Activated naive CD4-positive, alpha-beta T cell treated with anti-CD3 and anti-CD28 coated beads for 36 hours (primary cell): ENCODE measurements at regions of chr1 and their contacts with region 1.

Region 1: DNA sequence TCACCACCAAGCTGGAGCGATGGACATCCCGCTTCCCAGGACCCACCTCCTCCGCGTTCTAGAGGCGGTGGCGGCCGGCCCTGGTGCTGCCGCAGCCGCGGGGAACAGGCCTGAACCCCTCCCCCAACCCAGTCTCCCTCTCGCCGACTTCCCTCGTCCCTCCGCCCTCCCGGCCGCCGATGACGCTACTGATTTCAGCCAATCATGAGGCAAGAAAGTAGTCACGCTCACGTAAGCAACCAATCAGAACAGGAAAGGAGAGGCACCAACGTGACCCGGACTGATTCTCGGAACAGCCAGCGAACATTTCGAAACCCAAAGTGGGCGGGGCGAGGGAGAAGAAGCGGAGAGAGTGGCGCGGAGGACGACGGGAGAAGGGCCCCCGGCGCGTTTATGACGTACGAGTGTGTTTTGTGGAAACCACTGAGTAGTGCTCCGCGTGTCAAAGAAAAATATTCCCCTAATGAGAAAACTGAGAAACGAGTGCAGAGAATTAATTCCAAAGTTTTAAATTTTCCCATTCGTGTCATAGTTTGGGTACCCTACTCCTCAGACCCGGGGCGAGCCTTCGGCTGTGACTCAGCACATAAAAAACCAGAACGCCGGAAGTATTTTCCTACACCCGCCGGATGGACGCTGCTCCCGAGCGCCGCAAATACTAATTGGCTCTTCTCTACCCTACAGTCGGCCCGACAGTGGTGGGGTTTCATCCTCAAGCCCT is at the start of gene NRDC:
- DNase-seq: peak; percentile 100
- H3K4me3 Mint-ChIP-seq: no peak within 1 kb of the TSS
- H3K27ac Mint-ChIP-seq: no peak within 1 kb of the TSS
- H3K4me1 Mint-ChIP-seq: peaks cover 26% of the 10 kb centered on the region
- H3K27me3 Mint-ChIP-seq: peaks cover 2% of the 10 kb centered on the region
- total RNA-seq, gene NRDC: 136 to 145 TPM

Region 2: GRCh38 chr1:50968158-50968820 is 910.5 kb before region 1 on chr1:
- CTCF ChIA-PET with region 1: no interaction called
- intact Hi-C with region 1: loop called (anchors 5 kb)
- DNase-seq: peak; percentile 87
- H3K4me3 Mint-ChIP-seq: peak overlapping the region; percentile 90
- H3K27ac Mint-ChIP-seq: peak overlapping the region; percentile 96
- H3K4me1 Mint-ChIP-seq: peaks cover 21% of the 10 kb centered on the region
- H3K27me3 Mint-ChIP-seq: peaks cover 11% of the 10 kb centered on the region

Region 3: GRCh38 chr1:51506537-51506936 is 372.2 kb before region 1 on chr1:
- CTCF ChIA-PET with region 1: no interaction called
- intact Hi-C with region 1: loop called (anchors 1 kb)
- DNase-seq: no peak
- H3K4me3 Mint-ChIP-seq: no peak overlapping the region
- H3K27ac Mint-ChIP-seq: no peak overlapping the region
- H3K4me1 Mint-ChIP-seq: peaks cover 52% of the 10 kb centered on the region
- H3K27me3 Mint-ChIP-seq: no peaks in the 10 kb centered on the region

Region 4: DNA sequence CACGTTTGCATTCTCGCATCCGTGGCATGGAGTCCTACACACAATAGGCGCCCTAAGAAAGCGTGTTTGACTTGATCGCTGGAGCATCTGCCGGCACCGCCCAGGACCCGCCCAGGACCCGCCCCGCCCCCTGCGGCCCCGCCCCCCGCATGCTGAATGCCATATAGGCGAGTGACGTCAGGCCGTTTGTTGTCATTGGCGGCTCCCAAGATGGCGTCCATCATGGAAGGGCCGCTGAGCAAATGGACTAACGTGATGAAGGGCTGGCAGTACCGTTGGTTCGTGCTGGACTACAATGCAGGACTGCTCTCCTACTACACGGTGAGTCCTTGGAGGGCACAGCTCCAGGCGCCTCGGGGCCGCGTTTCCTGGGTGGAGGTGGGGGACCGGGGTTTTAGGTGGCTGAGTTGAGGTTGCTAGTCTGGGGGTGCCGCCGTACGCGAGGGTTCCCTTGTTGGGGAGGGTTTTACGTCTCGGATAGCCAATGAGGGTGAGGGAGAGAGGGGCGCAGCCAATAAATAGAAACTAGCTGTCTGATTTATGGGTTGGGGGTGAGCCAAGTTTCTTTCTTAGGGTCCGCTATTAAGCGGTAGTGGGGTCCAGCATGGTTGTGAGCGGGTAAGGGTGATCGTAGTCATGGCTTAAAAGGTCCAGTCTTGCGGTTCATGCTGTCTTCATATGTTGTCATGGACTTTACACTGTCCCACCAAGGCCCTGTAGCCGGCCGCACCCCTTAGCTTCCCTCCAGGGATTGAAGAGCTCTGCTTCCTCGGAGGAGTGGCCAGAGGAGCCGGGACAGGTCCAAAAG is 261.7 kb before region 1 on chr1 and contains the start of gene OSBPL9:
- CTCF ChIA-PET with region 1: no interaction called
- intact Hi-C with region 1: loop called (anchors 2 kb)
- DNase-seq: peak; percentile 94
- H3K4me3 Mint-ChIP-seq: peak within 1 kb of the TSS; percentile 98
- H3K27ac Mint-ChIP-seq: peak within 1 kb of the TSS; percentile 89
- H3K4me1 Mint-ChIP-seq: peaks cover 25% of the 10 kb centered on the region
- H3K27me3 Mint-ChIP-seq: no peaks in the 10 kb centered on the region
- total RNA-seq, gene OSBPL9: 38.2 to 40.7 TPM

Region 5: GRCh38 chr1:51708911-51709760 is 169.6 kb before region 1 on chr1:
- CTCF ChIA-PET with region 1: no interaction called
- intact Hi-C with region 1: no loop called
- DNase-seq: no peak
- H3K4me3 Mint-ChIP-seq: no peak overlapping the region
- H3K27ac Mint-ChIP-seq: no peak overlapping the region
- H3K4me1 Mint-ChIP-seq: peaks cover 3% of the 10 kb centered on the region
- H3K27me3 Mint-ChIP-seq: no peaks in the 10 kb centered on the region

Region 6: DNA sequence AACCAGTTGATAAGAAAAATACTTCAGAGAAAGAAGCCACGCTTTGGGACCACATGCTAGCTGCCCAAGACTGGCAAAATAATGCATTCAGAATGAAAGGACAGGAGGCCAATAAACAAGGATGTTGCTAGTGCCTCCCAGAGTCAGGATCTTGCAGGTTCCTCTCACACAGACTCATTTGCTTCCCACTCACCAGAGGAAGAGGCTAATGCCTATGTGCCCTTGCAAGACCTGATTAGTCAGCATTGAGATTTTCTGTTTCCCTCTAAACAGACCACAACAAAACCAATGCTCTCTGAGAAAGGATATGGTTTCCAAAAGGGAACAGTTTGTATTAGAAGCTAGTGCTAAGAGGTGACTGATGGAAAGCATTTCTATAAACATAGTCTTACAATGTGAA is 85.9 kb before region 1 on chr1:
- CTCF ChIA-PET with region 1: no interaction called
- intact Hi-C with region 1: loop called (anchors 2 kb)
- DNase-seq: peak; percentile 32
- H3K4me3 Mint-ChIP-seq: no peak overlapping the region
- H3K27ac Mint-ChIP-seq: peak overlapping the region; percentile 39
- H3K4me1 Mint-ChIP-seq: peaks cover 11% of the 10 kb centered on the region
- H3K27me3 Mint-ChIP-seq: no peaks in the 10 kb centered on the region

Region 7: GRCh38 chr1:52141513-52142219 is 262.9 kb after region 1 on chr1 and contains the start of gene ZFYVE9:
- CTCF ChIA-PET with region 1: no interaction called
- intact Hi-C with region 1: loop called (anchors 2 kb)
- DNase-seq: peak; percentile 66
- H3K4me3 Mint-ChIP-seq: peak within 1 kb of the TSS; percentile 84
- H3K27ac Mint-ChIP-seq: peak within 1 kb of the TSS; percentile 68
- H3K4me1 Mint-ChIP-seq: peaks cover 40% of the 10 kb centered on the region
- H3K27me3 Mint-ChIP-seq: no peaks in the 10 kb centered on the region
- total RNA-seq, gene ZFYVE9: 3.0 to 3.5 TPM

Region 8: GRCh38 chr1:52552505-52553361 is 674.0 kb after region 1 on chr1 and contains the start of gene TUT4:
- CTCF ChIA-PET with region 1: no interaction called
- intact Hi-C with region 1: loop called (anchors 1 kb)
- DNase-seq: peak; percentile 88
- H3K4me3 Mint-ChIP-seq: peak within 1 kb of the TSS; percentile 50
- H3K27ac Mint-ChIP-seq: no peak within 1 kb of the TSS
- H3K4me1 Mint-ChIP-seq: peaks cover 31% of the 10 kb centered on the region
- H3K27me3 Mint-ChIP-seq: no peaks in the 10 kb centered on the region
- total RNA-seq, gene TUT4: 48.1 to 51.2 TPM